Spleen (tissue), 13 donors: ENCODE measurements at regions of chr19 and their contacts with region 1.

Region 1: GRCh38 chr19:47243776-47244547 is 12.4 kb upstream of the CCDC9 start:
- DNase-seq: peak; percentile 98
- H3K4me3 ChIP-seq: peak overlapping the region; percentile 5 to 58 (median 18)
- H3K27ac ChIP-seq: peak overlapping the region in 7 of 8 donors; percentile 36 to 83 (median 62)
- H3K4me1 ChIP-seq: peaks cover 21 to 71% (median 59%) of the 10 kb centered on the region in 6 donors
- H3K27me3 ChIP-seq: peaks cover 0 to 69% (median 8%) of the 10 kb centered on the region in 7 donors
- CTCF ChIP-seq: peak; percentile 95 to 100 (median 99)
- POLR2A ChIP-seq: no peak

Region 2: GRCh38 chr19:47152224-47153017 is 91.5 kb before region 1 on chr19:
- intact Hi-C with region 1: loop called (anchors 2 kb)
- DNase-seq: no peak
- H3K4me3 ChIP-seq: no peak overlapping the region
- H3K27ac ChIP-seq: peak overlapping the region in 1 of 8 donors; percentile 84
- H3K4me1 ChIP-seq: peaks cover 25 to 74% (median 48%) of the 10 kb centered on the region in 6 donors
- H3K27me3 ChIP-seq: no peaks in the 10 kb centered on the region
- CTCF ChIP-seq: no peak
- POLR2A ChIP-seq: no peak

Region 3: GRCh38 chr19:47209319-47210179 is 34.4 kb before region 1 on chr19:
- intact Hi-C with region 1: loop called (anchors 5 kb)
- DNase-seq: no peak
- H3K4me3 ChIP-seq: no peak overlapping the region
- H3K27ac ChIP-seq: no peak overlapping the region
- H3K4me1 ChIP-seq: peaks cover 4 to 16% (median 12%) of the 10 kb centered on the region in 6 donors
- H3K27me3 ChIP-seq: no peaks in the 10 kb centered on the region
- CTCF ChIP-seq: no peak
- POLR2A ChIP-seq: no peak

Region 4: DNA sequence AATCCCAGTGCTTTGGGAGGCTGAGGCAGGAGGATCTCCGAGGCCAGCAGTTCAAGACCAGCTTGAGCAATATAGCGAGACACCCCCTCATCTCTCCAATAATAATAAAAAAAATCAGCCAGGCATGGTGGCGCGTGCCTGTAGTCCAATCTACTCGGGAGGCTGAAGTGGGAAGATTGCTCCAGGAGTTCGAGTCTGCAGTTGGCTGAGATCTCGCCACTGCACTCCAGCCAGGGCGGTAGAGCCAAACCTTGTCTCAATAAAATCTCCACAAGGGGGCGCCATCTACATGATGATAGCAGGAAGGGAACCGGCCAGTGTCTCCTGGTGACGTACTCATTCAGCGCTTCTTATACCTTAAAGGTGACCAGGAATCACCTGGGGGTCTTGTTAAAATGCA is 52.1 kb after region 1 on chr19:
- intact Hi-C with region 1: no loop called
- DNase-seq: peak; percentile 82
- H3K4me3 ChIP-seq: no peak overlapping the region
- H3K27ac ChIP-seq: no peak overlapping the region
- H3K4me1 ChIP-seq: peaks cover 0 to 33% (median 6%) of the 10 kb centered on the region in 6 donors
- H3K27me3 ChIP-seq: no peaks in the 10 kb centered on the region
- CTCF ChIP-seq: peak; percentile 60 to 91 (median 83)
- POLR2A ChIP-seq: no peak

Region 5: DNA sequence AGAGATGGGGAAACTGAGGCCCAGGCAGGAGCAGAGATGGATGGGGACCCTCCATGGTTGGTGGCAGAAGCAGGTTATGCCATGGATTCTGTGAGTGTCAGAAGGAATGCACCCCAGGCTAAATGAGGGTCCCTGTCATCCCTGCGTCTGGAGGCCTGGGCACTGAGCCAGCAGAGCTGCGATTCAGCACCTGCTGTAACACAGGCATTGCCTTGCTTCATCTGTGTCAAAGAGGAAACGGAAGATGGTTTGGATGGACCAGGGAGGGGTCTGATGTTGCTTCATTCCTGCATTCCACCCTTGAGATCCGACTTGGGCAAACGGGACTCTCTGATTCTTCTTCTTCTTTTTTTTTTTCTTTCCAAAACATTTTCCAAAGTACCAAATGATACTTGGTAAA is 66.9 kb after region 1 on chr19:
- intact Hi-C with region 1: no loop called
- DNase-seq: peak; percentile 89
- H3K4me3 ChIP-seq: peak overlapping the region in 6 of 8 donors; percentile 23 to 68 (median 29)
- H3K27ac ChIP-seq: peak overlapping the region in 7 of 8 donors; percentile 60 to 93 (median 85)
- H3K4me1 ChIP-seq: peaks cover 0 to 56% (median 5%) of the 10 kb centered on the region in 6 donors
- H3K27me3 ChIP-seq: peaks cover 0 to 59% (median 0%) of the 10 kb centered on the region in 7 donors
- CTCF ChIP-seq: no peak
- POLR2A ChIP-seq: no peak

Region 6: GRCh38 chr19:47330466-47330869 is 86.5 kb after region 1 on chr19:
- intact Hi-C with region 1: no loop called
- DNase-seq: no peak
- H3K4me3 ChIP-seq: peak overlapping the region in 1 of 8 donors; percentile 39
- H3K27ac ChIP-seq: peak overlapping the region; percentile 40 to 89 (median 82)
- H3K4me1 ChIP-seq: peaks cover 0 to 41% (median 10%) of the 10 kb centered on the region in 6 donors
- H3K27me3 ChIP-seq: peaks cover 0 to 5% (median 0%) of the 10 kb centered on the region in 7 donors
- CTCF ChIP-seq: no peak
- POLR2A ChIP-seq: peak in 1 of 3 donors; percentile 37